Vagina (tissue), 2 donors: ENCODE measurements at regions of chr18 and their contacts with region 1.

Region 1: DNA sequence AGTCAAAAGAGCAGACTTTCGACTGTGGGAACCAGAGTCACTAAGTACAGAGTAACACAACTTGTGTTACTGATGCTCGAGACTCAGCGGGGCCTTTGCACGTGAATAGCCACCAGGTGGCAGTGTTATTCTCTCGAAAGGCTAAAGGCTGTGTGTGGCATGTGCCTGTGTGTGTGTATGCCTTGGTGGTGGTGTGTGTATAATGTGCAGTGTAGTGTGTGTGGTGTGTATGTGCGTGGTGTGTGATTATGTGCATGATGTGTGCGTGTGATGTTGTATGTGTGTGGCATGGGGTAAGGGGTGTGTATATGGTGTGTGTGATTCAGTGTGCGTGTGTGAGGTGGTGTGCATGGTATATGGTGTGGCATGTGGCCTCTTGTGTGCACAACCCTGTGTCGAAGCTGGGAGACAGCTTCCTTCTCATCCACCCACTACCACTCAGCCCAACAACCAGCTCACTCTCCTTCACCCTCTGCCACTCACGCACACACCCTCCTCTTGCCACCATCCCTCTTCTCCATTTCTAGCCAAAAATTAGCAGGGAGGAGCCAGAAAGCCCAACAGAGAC is 83.0 kb upstream of the ZNF532 start:
- DNase-seq: no peak
- H3K4me3 ChIP-seq: no peak overlapping the region
- H3K27ac ChIP-seq: peak overlapping the region; percentile 17
- H3K4me1 ChIP-seq: peaks cover 27% of the 10 kb centered on the region
- H3K27me3 ChIP-seq: no peaks in the 10 kb centered on the region
- CTCF ChIP-seq: peak; percentile 77 to 94 (median 82)
- POLR2A ChIP-seq: no peak

Region 2: DNA sequence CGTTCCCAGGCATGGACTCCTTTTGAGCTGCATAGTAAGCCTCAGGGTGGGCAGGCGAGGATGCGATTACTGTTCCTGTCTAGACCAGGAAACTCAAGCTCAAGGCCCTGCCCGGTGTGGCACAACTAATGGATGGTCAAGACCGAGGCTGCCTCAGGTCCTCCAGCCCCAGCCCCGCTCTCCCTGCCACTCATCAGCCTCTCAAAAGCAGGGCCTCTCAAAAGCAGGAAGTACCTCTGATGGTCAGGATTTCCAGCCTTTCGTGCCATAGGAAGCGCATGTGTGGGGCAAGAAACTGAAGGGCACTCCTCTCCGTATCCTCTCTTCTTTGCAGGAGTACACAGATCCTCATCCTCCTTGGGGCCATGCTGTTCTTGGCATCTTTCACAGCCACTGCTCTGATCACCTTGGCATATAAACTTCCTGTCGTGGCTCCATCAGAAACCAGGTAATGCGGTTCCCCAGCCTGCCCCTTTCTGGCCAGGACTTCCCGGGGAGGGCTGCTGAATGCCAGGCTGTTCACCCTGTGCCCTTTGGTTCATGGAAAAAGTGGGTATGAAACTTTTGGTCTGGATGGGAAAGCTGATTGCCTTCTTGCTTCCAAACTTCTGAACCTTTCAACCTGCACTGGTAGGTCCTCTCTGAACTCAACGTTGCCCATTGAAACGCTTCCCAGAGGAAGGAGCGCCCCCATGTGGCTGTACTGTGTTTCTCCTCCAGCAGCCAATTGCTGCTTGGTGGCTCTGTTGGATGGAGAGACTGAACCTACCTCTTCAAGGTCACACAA is 275.2 kb after region 1 on chr18:
- intact Hi-C with region 1: loop called (anchors 5 kb)
- DNase-seq: no peak
- H3K4me3 ChIP-seq: no peak overlapping the region
- H3K27ac ChIP-seq: no peak overlapping the region
- H3K4me1 ChIP-seq: peaks cover 17% of the 10 kb centered on the region
- H3K27me3 ChIP-seq: no peaks in the 10 kb centered on the region
- CTCF ChIP-seq: peak; percentile 35 to 80 (median 80)
- POLR2A ChIP-seq: no peak

Region 3: DNA sequence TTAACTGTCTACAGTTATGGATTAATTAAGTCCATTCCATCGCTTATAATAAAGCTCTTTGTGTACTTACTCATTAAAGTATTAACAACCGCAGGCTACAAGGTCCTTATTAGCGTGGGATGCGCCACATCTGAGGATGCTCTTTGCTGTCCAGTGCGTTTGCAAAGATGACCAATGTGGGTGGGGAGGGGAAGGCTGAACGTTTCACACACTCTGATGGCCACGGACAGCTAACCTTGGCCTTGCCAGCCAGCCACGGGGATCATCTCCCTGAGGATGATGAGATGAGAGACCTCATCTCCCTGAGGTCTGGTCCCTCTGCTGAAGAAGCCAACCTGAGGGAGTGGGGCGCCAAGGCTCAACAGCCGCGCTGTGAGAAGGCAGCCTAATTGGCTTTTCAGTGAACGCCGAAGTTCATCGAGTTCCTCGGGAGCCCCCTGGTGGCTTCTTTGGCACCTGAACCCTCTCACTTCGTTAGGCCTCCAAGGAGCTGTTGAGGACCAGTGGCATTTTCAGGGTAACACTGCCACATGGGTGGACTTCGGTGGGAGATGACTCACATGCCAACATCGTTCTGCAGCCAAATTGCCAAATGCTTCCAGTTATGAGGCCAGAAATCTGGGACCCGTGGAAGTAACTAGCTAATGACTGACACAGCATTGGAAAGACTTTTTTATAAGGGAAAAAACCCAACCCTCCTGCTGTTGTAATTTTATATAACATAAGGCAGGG is 288.6 kb after region 1 on chr18:
- intact Hi-C with region 1: loop called (anchors 2 kb)
- DNase-seq: no peak
- H3K4me3 ChIP-seq: no peak overlapping the region
- H3K27ac ChIP-seq: no peak overlapping the region
- H3K4me1 ChIP-seq: no peaks in the 10 kb centered on the region
- H3K27me3 ChIP-seq: no peaks in the 10 kb centered on the region
- CTCF ChIP-seq: peak; percentile 74 to 91 (median 75)
- POLR2A ChIP-seq: no peak